Esophagus muscularis mucosa (tissue), 4 donors: ENCODE measurements at regions of chr7 and their contacts with region 1.

Region 1: DNA sequence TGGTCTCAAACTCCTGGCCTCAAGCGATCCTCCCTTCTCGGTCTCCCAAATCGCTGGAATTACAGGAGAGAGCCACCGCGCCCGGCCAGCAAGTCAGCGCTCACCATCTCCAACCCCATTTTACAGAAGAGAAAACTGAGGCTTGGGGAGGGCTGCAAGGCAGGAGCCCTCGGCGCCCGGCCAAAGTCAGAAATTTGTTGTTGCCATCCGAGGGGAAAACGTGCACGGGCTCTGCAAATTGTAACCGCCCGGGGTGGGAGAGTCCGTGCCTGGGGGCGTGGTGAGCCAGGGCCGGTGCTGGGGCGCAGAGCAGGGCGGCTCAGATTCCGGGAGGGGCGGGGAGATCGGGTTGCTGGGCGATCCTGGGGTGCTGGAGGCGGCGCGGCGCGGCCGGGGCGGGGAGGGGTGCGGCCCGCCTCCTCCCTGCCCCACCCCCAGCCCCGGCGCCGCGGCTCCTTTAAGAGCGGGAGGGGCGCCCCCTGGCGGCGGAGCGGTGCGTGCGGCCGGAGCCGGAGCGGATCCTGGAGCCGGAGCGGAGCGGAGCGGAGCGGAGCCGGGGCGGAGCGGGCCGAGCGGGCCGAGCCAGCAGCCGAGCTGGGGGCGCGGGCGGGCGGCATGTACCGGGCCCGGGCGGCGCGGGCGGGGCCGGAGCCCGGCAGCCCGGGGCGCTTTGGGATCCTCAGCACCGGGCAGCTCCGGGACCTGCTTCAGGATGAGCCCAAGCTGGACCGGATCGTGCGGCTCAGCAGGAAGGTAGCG is at the start of gene VPS37D:
- DNase-seq: peak; percentile 95
- H3K4me3 ChIP-seq: peak within 1 kb of the TSS; percentile 64 to 91 (median 75)
- H3K27ac ChIP-seq: peak within 1 kb of the TSS in 1 of 4 donors; percentile 57
- H3K4me1 ChIP-seq: peaks cover 10 to 31% (median 19%) of the 10 kb centered on the region in 4 donors
- H3K27me3 ChIP-seq: peaks cover 0 to 5% (median 0%) of the 10 kb centered on the region in 4 donors
- CTCF ChIP-seq: peak; percentile 85 to 94 (median 94)
- EP300 ChIP-seq: no peak
- POLR2A ChIP-seq: no peak
- total RNA-seq, gene VPS37D: 2.5 to 7.1 (median 4.0) TPM

Region 2: GRCh38 chr7:73606801-73607691 is 60.5 kb before region 1 on chr7:
- intact Hi-C with region 1: loop called (anchors 2 kb)
- DNase-seq: no peak
- H3K4me3 ChIP-seq: peak overlapping the region in 3 of 4 donors; percentile 19 to 37 (median 27)
- H3K27ac ChIP-seq: no peak overlapping the region
- H3K4me1 ChIP-seq: peaks cover 3 to 9% (median 7%) of the 10 kb centered on the region in 4 donors
- H3K27me3 ChIP-seq: peaks cover 0 to 62% (median 2%) of the 10 kb centered on the region in 4 donors
- CTCF ChIP-seq: peak; percentile 90 to 96 (median 91)
- EP300 ChIP-seq: no peak
- POLR2A ChIP-seq: no peak

Region 3: DNA sequence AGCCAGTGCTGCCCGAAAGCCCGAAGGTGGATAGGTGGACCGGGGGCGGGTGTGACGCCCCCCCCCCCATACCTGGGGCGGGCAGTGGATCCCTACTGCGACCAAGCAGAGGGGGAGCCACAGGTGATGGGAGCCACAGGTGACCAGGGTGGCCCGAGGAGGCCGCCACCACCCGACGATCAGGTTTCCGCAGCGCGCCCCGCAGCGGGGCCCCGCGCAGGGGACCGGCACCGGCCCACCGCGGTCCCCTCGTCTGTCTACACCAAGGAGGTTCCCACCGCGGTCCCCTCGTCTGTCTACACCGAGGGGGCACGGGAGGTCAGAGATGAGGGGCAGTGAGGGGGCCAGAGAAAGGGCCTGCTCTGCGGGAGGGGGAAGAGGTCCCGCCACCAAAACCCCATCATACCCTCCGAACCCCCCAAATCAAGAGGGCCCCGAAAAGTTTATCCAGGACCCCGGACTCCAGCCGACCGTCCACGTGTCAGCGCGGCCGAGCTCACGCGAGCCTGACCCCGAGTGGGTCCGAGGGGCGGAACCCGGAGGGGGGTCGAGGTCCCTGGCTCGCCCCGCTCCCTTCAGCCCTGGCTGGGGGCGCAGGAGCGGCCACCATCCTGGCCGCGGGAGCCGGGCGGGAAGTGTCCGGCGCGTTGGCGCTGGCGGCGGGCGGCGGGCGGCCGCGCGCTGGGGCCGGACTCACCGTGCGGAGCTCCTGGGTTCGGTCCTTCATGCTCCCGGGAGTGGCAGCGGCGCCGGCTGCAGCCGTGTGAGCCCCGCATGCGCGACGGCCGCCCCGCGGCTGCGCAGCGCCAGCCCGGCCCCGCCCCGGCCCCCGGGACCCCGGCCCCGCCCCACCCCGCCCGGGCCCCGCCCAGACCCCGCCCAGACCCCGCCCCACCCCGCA is 51.6 kb after region 1 on chr7 and contains the start of gene STX1A:
- intact Hi-C with region 1: loop called (anchors 10 kb)
- DNase-seq: no peak
- H3K4me3 ChIP-seq: peak within 1 kb of the TSS; percentile 76 to 90 (median 87)
- H3K27ac ChIP-seq: peak within 1 kb of the TSS; percentile 72 to 85 (median 76)
- H3K4me1 ChIP-seq: peaks cover 32 to 65% (median 58%) of the 10 kb centered on the region in 4 donors
- H3K27me3 ChIP-seq: no peaks in the 10 kb centered on the region
- CTCF ChIP-seq: no peak
- EP300 ChIP-seq: no peak
- POLR2A ChIP-seq: no peak
- total RNA-seq, gene STX1A: 7.1 to 16.0 (median 9.6) TPM